ENCODE measurements at regions of chr19 and their contacts with region 1.

Region 1: GRCh38 chr19:45643024-45643926 is 4.1 kb upstream of the EML2 start:
- DNase-seq: peak; percentile 87 to 92 (median 89)
- H3K4me3 ChIP-seq: no peak overlapping the region
- H3K4me3 Mint-ChIP-seq: peak overlapping the region; percentile 77 to 92 (median 82)
- H3K27ac ChIP-seq: peak overlapping the region; percentile 98
- H3K27ac Mint-ChIP-seq: peak overlapping the region; percentile 91 to 98 (median 93)
- H3K4me1 ChIP-seq: peaks cover 63% of the 10 kb centered on the region
- H3K4me1 Mint-ChIP-seq: peaks cover 28 to 57% (median 41%) of the 10 kb centered on the region in 4 donors
- H3K27me3 ChIP-seq: no peaks in the 10 kb centered on the region
- H3K27me3 Mint-ChIP-seq: no peaks in the 10 kb centered on the region

Region 2: GRCh38 chr19:45478454-45479238 is 164.6 kb before region 1 on chr19:
- CTCF ChIA-PET with region 1: interaction called, 7 read pairs
- POLR2A ChIA-PET with region 1: interaction called, 16 read pairs
- intact Hi-C with region 1: no loop called
- DNase-seq: peak; percentile 91 to 92 (median 91)
- H3K4me3 ChIP-seq: peak overlapping the region; percentile 51 to 74
- H3K4me3 Mint-ChIP-seq: peak overlapping the region; percentile 62 to 93 (median 84)
- H3K27ac ChIP-seq: peak overlapping the region; percentile 93
- H3K27ac Mint-ChIP-seq: peak overlapping the region; percentile 97 to 99 (median 98)
- H3K4me1 ChIP-seq: peaks cover 14% of the 10 kb centered on the region
- H3K4me1 Mint-ChIP-seq: peaks cover 25 to 46% (median 28%) of the 10 kb centered on the region in 4 donors
- H3K27me3 ChIP-seq: no peaks in the 10 kb centered on the region
- H3K27me3 Mint-ChIP-seq: peaks cover 1% of the 10 kb centered on the region in 2 donors

Region 3: GRCh38 chr19:45506246-45506990 is 136.9 kb before region 1 on chr19:
- CTCF ChIA-PET with region 1: interaction called, 5 read pairs
- POLR2A ChIA-PET with region 1: interaction called, 8 read pairs
- intact Hi-C with region 1: loop called (anchors 1 kb)
- DNase-seq: peak; percentile 96 to 98 (median 97)
- H3K4me3 ChIP-seq: peak overlapping the region; percentile 95 to 97
- H3K4me3 Mint-ChIP-seq: peak overlapping the region; percentile 87 to 96 (median 94)
- H3K27ac ChIP-seq: peak overlapping the region; percentile 90
- H3K27ac Mint-ChIP-seq: peak overlapping the region; percentile 96 to 99 (median 97)
- H3K4me1 ChIP-seq: peaks cover 35% of the 10 kb centered on the region
- H3K4me1 Mint-ChIP-seq: peaks cover 20 to 61% (median 34%) of the 10 kb centered on the region in 4 donors
- H3K27me3 ChIP-seq: no peaks in the 10 kb centered on the region
- H3K27me3 Mint-ChIP-seq: no peaks in the 10 kb centered on the region

Region 4: DNA sequence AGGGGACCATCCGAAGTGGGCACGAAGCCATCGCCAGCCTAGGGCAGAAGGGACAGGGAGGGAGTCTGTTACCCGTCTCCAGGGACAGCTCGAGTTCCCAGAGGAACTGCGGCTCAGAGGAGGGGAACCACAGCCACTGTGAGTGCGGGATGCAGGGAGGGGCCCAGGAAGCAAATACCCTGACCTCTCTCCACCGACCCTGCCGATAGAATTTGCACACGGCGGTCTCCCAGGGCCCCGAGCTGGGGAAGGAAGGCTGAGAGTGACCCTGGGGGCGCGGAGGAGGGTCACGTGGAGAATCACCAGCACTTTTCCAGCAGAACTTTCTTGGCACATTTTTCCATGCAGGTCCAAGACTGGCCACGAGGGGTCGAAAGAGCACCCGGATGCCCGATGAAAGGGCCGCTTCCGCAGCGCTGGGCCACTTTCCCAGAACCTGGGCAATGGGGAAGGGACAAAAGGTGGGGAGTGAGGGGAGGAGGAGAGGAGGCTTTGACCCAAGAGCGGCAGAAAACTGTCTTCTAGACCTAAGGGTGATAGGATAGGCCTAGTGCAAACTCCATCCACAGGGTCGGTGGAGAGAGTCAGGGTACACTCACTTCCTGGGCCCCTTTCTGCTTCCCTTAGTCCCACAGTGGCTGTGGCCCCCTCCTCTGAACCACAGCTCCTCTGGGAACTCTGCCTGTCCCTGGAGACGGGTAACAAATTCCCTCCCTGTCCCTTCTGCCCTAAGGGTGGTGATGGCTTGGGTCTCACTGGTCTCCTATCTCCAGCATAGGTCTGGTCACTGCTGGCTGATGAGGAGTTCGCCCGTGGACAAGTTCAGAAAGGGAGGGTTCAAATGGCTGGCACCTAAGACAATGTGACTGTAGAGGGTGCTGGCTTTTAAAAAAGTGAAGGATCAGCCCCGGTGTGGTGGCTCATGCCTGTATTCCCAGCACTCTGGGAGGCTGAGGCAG is 35.9 kb before region 1 on chr19:
- CTCF ChIA-PET with region 1: interaction called, 121 read pairs
- POLR2A ChIA-PET with region 1: interaction called, 29 read pairs
- intact Hi-C with region 1: loop called (anchors 1 kb)
- DNase-seq: peak in 4 of 5 donors; percentile 14 to 36 (median 20)
- H3K4me3 ChIP-seq: no peak overlapping the region
- H3K4me3 Mint-ChIP-seq: peak overlapping the region in 3 of 8 donors; percentile 44 to 65 (median 54)
- H3K27ac ChIP-seq: no peak overlapping the region
- H3K27ac Mint-ChIP-seq: peak overlapping the region in 4 of 7 donors; percentile 4 to 89 (median 42)
- H3K4me1 ChIP-seq: peaks cover 9% of the 10 kb centered on the region
- H3K4me1 Mint-ChIP-seq: peaks cover 5 to 11% (median 8%) of the 10 kb centered on the region in 4 donors
- H3K27me3 ChIP-seq: peaks cover 2% of the 10 kb centered on the region
- H3K27me3 Mint-ChIP-seq: peaks cover 7 to 9% of the 10 kb centered on the region in 2 donors

Region 5: GRCh38 chr19:45667620-45668341 is 24.5 kb after region 1 on chr19 and contains the start of gene GIPR:
- CTCF ChIA-PET with region 1: interaction called, 3 read pairs
- POLR2A ChIA-PET with region 1: interaction called, 5 read pairs
- intact Hi-C with region 1: loop called (anchors 2 kb)
- DNase-seq: peak in 4 of 5 donors; percentile 18 to 67 (median 29)
- H3K4me3 ChIP-seq: peak within 1 kb of the TSS; percentile 72 to 73
- H3K4me3 Mint-ChIP-seq: peak within 1 kb of the TSS; percentile 85 to 94 (median 90)
- H3K27ac ChIP-seq: no peak within 1 kb of the TSS
- H3K27ac Mint-ChIP-seq: peak within 1 kb of the TSS; percentile 12 to 92 (median 87)
- H3K4me1 ChIP-seq: peaks cover 29% of the 10 kb centered on the region
- H3K4me1 Mint-ChIP-seq: peaks cover 19 to 39% (median 30%) of the 10 kb centered on the region in 4 donors
- H3K27me3 ChIP-seq: no peaks in the 10 kb centered on the region
- H3K27me3 Mint-ChIP-seq: peaks cover 4 to 20% of the 10 kb centered on the region in 2 donors
- total RNA-seq, gene GIPR: 6.1 to 6.4 TPM

Region 6: GRCh38 chr19:45717166-45717982 is 74.1 kb after region 1 on chr19:
- CTCF ChIA-PET with region 1: no interaction called
- POLR2A ChIA-PET with region 1: interaction called, 19 read pairs
- intact Hi-C with region 1: no loop called
- DNase-seq: peak; percentile 97 to 99 (median 98)
- H3K4me3 ChIP-seq: peak overlapping the region; percentile 72 to 90
- H3K4me3 Mint-ChIP-seq: peak overlapping the region; percentile 92 to 99 (median 97)
- H3K27ac ChIP-seq: peak overlapping the region; percentile 86
- H3K27ac Mint-ChIP-seq: peak overlapping the region; percentile 84 to 99 (median 98)
- H3K4me1 ChIP-seq: peaks cover 38% of the 10 kb centered on the region
- H3K4me1 Mint-ChIP-seq: peaks cover 32 to 59% (median 39%) of the 10 kb centered on the region in 4 donors
- H3K27me3 ChIP-seq: no peaks in the 10 kb centered on the region
- H3K27me3 Mint-ChIP-seq: no peaks in the 10 kb centered on the region

Region 7: DNA sequence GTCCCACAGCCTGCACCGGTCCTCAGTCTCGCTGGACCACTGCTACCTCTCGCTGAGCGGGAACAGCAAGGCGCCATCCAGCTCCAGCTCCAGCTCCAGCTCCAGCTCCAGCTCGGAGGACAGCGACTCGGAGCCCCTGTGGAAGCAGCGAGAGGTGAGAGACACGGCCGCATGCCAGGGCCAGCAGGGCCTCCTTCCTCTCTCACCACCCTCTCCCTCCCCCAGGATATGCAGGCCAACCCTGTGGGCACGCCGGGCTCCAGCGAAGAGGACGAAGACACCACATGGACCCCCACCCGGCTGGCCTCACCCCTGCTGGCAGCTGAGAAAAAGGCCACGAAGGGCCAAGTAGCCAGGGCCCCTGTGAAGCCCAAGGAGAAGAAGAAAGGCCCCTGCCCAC is 118.4 kb after region 1 on chr19:
- CTCF ChIA-PET with region 1: no interaction called
- POLR2A ChIA-PET with region 1: no interaction called
- intact Hi-C with region 1: no loop called
- DNase-seq: no peak
- H3K4me3 ChIP-seq: no peak overlapping the region
- H3K4me3 Mint-ChIP-seq: no peak overlapping the region
- H3K27ac ChIP-seq: no peak overlapping the region
- H3K27ac Mint-ChIP-seq: no peak overlapping the region
- H3K4me1 ChIP-seq: no peaks in the 10 kb centered on the region
- H3K4me1 Mint-ChIP-seq: peaks cover 0 to 1% (median 0%) of the 10 kb centered on the region in 4 donors
- H3K27me3 ChIP-seq: no peaks in the 10 kb centered on the region
- H3K27me3 Mint-ChIP-seq: peaks cover 2 to 8% of the 10 kb centered on the region in 2 donors

Measured in CD4-positive, alpha-beta memory T cell (primary cell).